Posterior vena cava (tissue), 2 donors: ENCODE measurements at regions of chr4 and their contacts with region 1.

Region 1: DNA sequence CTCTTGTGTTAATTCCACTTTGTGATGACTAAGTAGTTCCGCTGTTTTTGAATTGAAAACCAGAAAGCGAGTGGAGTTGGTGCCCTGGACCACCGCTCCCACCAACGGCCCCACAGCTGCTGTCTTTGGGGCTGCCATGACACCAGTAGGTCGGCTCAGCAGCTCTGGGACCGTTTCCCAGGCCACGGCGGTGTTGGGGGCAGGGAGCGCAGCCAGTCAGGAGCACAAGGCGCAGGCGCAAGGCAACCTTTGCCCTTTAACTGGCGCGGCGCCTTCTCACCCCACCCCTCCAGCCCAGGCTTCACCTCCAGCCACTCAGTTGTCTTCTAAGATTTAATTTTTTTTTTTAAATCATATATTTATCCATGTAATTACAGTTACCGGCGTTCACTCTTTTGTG is at the start of gene GK2:
- DNase-seq: peak; percentile 82
- total RNA-seq, gene GK2: not detected

Region 2: DNA sequence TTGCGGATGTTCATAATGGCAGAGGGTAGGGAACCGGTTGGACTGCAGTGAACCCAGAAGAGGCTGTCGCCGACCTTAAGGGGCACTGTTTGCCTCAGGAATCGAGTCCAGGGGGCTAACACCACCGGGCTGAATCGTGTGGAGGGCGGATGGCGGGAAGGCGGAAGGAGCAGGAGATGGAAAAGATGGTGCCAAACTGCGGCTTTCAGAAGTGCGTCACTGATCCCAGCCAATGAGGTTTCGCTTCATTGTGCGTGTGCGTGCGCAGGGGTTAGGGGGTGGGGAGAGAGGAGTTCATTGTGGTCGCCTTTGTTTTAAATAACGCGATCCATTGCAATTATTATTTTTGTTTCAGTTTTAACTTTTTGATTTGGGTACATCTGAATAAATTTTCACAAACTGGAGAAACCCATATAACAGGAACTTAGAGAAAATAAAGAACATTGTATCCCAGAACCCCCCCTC is 82.2 kb before region 1 on chr4 and contains the start of gene NAA11:
- intact Hi-C with region 1: loop called in 1 of 2 experiments (anchors 2 kb)
- DNase-seq: no peak
- total RNA-seq, gene NAA11: not detected